Activated T-helper 2 cell treated with anti-CD3 and anti-CD28 coated beads, Interferon-gamma antibody, Interleukin-2, Interleukin-4, amounts not matched to agents 10 μg/mL and 5 μg/mL and 100 μg/mL, durations not matched to agents 14 hours and 24 hours and 36 hours (primary cell): ENCODE measurements at regions of chr2 and their contacts with region 1.

Region 1: DNA sequence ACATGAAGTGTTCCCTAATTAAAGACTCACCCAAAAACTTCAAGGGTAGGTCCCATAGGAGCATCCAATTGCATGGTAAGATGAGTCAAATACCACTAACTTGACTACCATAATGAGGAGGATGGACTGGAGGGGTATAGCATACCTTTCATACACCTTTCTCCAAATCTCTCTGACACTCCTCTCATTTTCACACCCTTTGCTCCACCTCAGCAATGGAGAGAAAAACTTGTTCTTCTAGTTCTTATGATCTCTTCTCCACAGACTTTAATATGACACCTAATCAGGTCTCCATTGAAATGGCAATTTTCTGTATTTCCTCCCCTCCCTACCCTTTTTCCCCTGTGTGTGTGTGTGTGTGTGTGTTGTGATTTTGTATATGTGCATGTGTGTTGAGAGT is 41.1 kb upstream of the MAP2 start:
- DNase-seq: no peak
- H3K4me3 Mint-ChIP-seq: no peak overlapping the region
- H3K27ac Mint-ChIP-seq: no peak overlapping the region
- H3K4me1 Mint-ChIP-seq: no peaks in the 10 kb centered on the region
- H3K27me3 Mint-ChIP-seq: no peaks in the 10 kb centered on the region

Region 2: GRCh38 chr2:209358992-209359391 is 23.8 kb before region 1 on chr2:
- intact Hi-C with region 1: loop called (anchors 1 kb)
- DNase-seq: no peak
- H3K4me3 Mint-ChIP-seq: no peak overlapping the region
- H3K27ac Mint-ChIP-seq: no peak overlapping the region
- H3K4me1 Mint-ChIP-seq: no peaks in the 10 kb centered on the region
- H3K27me3 Mint-ChIP-seq: no peaks in the 10 kb centered on the region